ENCODE measurements at regions of chr5 and their contacts with region 1.

Region 1: GRCh38 chr5:55850839-55851674 is at the start of gene IL31RA:
- DNase-seq: no peak
- H3K4me3 Mint-ChIP-seq: no peak within 1 kb of the TSS
- H3K27ac Mint-ChIP-seq: no peak within 1 kb of the TSS
- H3K4me1 Mint-ChIP-seq: peaks cover 43% of the 10 kb centered on the region
- H3K27me3 Mint-ChIP-seq: peaks cover 2% of the 10 kb centered on the region
- total RNA-seq, gene IL31RA: not detected

Region 2: DNA sequence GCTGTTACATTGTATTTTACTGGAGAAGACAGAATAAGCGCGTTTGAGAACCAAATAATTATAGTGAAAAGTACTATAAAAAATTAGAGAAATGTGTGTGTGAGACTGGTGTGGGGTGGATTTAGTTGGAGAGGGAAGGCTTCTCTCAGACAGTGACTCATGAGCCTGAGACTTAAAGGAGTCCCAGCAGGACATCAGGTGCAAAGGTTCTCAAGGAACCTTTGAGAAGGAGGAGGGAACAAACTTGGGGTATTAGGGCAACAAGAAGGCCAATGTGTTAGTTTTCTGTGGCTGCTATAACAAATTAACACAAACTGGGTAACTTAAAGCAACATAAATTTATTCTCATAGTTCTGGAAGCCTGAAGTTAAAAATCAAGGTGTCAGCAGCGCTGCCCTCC is 108.3 kb before region 1 on chr5:
- CTCF ChIA-PET with region 1: no interaction called
- POLR2A ChIA-PET with region 1: interaction called, 12 read pairs
- DNase-seq: no peak
- H3K4me3 Mint-ChIP-seq: no peak overlapping the region
- H3K27ac Mint-ChIP-seq: no peak overlapping the region
- H3K4me1 Mint-ChIP-seq: no peaks in the 10 kb centered on the region
- H3K27me3 Mint-ChIP-seq: peaks cover 2% of the 10 kb centered on the region